ENCODE measurements at regions of chr16 and their contacts with region 1.

Region 1: GRCh38 chr16:11658894-11659708 is 9.2 kb upstream of the SNN start:
- DNase-seq: no peak
- ATAC-seq: peak; percentile 42 to 86 (median 64)
- H3K4me3 ChIP-seq: no peak overlapping the region
- H3K27ac ChIP-seq: no peak overlapping the region
- H3K4me1 ChIP-seq: no peaks in the 10 kb centered on the region
- H3K27me3 ChIP-seq: no peaks in the 10 kb centered on the region
- CTCF ChIP-seq: no peak
- POLR2A ChIP-seq: no peak

Region 2: DNA sequence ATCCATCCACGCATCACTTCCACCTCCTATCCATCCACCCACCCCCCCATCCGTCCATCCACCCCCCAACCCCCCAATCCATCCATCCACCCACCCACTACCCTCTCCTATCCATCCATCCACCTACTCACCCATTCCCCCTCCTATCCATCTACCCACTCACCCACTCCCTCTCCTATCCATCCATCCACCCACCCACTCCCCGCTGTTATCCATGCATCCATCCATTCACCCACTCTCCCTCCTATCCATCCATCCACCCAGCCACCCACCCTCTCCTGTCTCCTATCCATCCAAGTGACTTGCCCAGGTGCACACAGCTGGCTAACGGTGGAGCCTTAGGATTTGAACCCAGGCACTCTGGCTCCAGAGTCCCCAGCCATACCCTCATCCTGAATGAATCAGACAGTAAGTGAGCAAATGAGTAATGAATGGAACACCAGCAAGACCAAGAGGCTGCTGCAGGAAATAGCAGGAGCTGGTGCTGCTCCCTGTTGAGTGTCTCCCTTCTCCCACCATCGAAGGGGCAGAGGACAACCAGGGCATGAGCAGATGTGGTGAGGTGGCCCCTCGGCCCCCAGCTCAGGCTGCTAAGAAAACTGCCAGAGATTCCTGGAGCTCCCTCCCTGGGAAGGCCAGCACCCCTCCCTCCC is 134.9 kb before region 1 on chr16:
- intact Hi-C with region 1: loop called in 1 of 2 experiments (anchors 5 kb)
- DNase-seq: peak in 1 of 3 donors; percentile 25
- ATAC-seq: no peak
- H3K4me3 ChIP-seq: no peak overlapping the region
- H3K27ac ChIP-seq: no peak overlapping the region
- H3K4me1 ChIP-seq: no peaks in the 10 kb centered on the region
- H3K27me3 ChIP-seq: no peaks in the 10 kb centered on the region
- CTCF ChIP-seq: no peak
- POLR2A ChIP-seq: no peak

Region 3: GRCh38 chr16:11597239-11598101 is 61.6 kb before region 1 on chr16:
- intact Hi-C with region 1: no loop called
- DNase-seq: peak in 2 of 3 donors; percentile 13 to 34
- ATAC-seq: peak; percentile 42 to 79 (median 50)
- H3K4me3 ChIP-seq: no peak overlapping the region
- H3K27ac ChIP-seq: peak overlapping the region in 2 of 3 donors; percentile 8 to 54
- H3K4me1 ChIP-seq: no peaks in the 10 kb centered on the region
- H3K27me3 ChIP-seq: no peaks in the 10 kb centered on the region
- CTCF ChIP-seq: no peak
- POLR2A ChIP-seq: no peak

Measured in right lobe of liver (tissue), 6 donors.